B cell (primary cell): ENCODE measurements at regions of chr22 and their contacts with region 1.

Region 1: DNA sequence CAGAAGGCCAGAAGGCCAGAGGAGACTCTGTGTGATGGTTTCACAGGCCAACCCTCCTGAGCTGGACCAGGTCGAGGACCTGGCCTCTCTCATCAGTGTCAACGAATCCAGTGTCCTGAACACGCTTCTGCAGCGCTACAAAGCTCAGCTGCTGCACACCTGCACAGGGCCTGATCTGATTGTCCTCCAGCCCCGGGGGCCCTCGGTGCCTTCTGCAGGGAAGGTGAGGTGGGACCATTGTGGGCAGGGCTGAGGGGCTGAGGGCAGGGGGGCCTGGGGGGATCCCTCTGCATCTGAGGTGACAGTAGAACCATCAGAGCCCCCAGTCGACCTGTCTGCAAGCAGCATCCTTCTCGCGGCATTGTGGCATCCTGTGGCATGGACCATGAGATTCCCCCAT is 30.3 kb downstream of the MYO18B start:
- DNase-seq: no peak
- ATAC-seq: no peak
- H3K4me3 ChIP-seq: no peak overlapping the region
- H3K4me3 Mint-ChIP-seq: no peak overlapping the region
- H3K27ac ChIP-seq: no peak overlapping the region
- H3K27ac Mint-ChIP-seq: no peak overlapping the region
- H3K4me1 ChIP-seq: peaks cover 3 to 7% of the 10 kb centered on the region in 2 donors
- H3K4me1 Mint-ChIP-seq: peaks cover 9% of the 10 kb centered on the region
- H3K27me3 ChIP-seq: no peaks in the 10 kb centered on the region
- H3K27me3 Mint-ChIP-seq: peaks cover 4% of the 10 kb centered on the region
- CTCF ChIP-seq: no peak

Region 2: DNA sequence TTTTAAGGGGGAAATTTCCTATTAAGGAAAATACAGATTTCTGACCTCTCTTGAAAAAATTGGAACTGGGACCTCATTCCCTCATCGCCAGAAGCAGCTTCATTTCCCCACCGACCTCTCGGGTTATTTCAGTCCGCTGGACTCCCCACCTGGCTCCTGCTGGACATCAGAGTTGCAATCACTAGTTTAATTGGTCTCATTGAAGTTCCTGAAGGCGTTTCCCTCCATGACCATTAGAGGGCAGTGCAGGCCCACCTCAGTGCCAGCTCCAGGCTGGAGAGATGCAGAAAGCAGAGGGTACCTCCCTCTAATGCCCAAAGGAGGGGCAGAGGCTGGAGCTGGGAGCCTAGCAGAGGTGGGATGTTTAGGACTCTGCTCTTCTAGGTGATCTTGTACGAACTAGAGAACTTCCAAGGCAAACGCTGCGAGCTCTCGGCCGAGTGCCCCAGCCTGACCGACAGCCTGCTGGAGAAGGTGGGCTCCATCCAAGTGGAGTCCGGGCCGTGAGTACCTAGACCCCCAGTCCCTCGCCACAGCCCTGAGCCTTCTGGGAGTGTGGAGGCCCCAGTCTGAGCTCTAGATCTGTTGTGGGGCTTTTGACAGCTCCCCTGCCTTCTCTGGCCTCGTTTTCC is 569.9 kb before region 1 on chr22:
- CTCF ChIA-PET with region 1: no interaction called
- POLR2A ChIA-PET with region 1: no interaction called
- intact Hi-C with region 1: loop called (anchors 2 kb)
- DNase-seq: peak; percentile 54
- ATAC-seq: peak; percentile 54
- H3K4me3 ChIP-seq: no peak overlapping the region
- H3K4me3 Mint-ChIP-seq: no peak overlapping the region
- H3K27ac ChIP-seq: no peak overlapping the region
- H3K27ac Mint-ChIP-seq: no peak overlapping the region
- H3K4me1 ChIP-seq: no peaks in the 10 kb centered on the region
- H3K4me1 Mint-ChIP-seq: no peaks in the 10 kb centered on the region
- H3K27me3 ChIP-seq: no peaks in the 10 kb centered on the region
- H3K27me3 Mint-ChIP-seq: peaks cover 10% of the 10 kb centered on the region
- CTCF ChIP-seq: peak; percentile 95

Region 3: DNA sequence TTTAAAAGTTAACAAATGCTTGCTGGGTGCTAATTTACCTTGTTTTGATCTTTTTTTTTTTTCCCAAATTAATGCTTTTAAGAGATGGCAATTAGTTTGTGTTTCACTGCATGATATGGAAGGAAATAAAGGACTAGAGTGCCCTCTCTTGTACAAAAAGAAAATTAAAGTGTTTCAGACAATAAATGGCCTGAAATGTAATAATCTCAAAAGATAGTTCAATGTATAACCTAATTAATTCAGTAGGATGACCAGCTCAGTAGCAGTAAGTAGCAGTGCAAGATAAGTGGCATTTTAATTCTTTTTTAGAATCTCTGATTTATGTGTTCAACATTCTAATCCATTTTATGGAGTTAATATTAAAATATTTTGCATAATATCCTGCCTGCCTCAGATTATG is 70.2 kb before region 1 on chr22:
- CTCF ChIA-PET with region 1: interaction called, 18 read pairs
- POLR2A ChIA-PET with region 1: no interaction called
- intact Hi-C with region 1: loop called (anchors 2 kb)
- DNase-seq: peak; percentile 42
- ATAC-seq: peak; percentile 36
- H3K4me3 ChIP-seq: no peak overlapping the region
- H3K4me3 Mint-ChIP-seq: no peak overlapping the region
- H3K27ac ChIP-seq: no peak overlapping the region
- H3K27ac Mint-ChIP-seq: no peak overlapping the region
- H3K4me1 ChIP-seq: no peaks in the 10 kb centered on the region
- H3K4me1 Mint-ChIP-seq: peaks cover 7% of the 10 kb centered on the region
- H3K27me3 ChIP-seq: no peaks in the 10 kb centered on the region
- H3K27me3 Mint-ChIP-seq: no peaks in the 10 kb centered on the region
- CTCF ChIP-seq: peak; percentile 70

Region 4: GRCh38 chr22:25726241-25726640 is 46.0 kb before region 1 on chr22:
- CTCF ChIA-PET with region 1: no interaction called
- POLR2A ChIA-PET with region 1: no interaction called
- intact Hi-C with region 1: no loop called
- DNase-seq: no peak
- ATAC-seq: no peak
- H3K4me3 ChIP-seq: no peak overlapping the region
- H3K4me3 Mint-ChIP-seq: no peak overlapping the region
- H3K27ac ChIP-seq: no peak overlapping the region
- H3K27ac Mint-ChIP-seq: no peak overlapping the region
- H3K4me1 ChIP-seq: no peaks in the 10 kb centered on the region
- H3K4me1 Mint-ChIP-seq: peaks cover 8% of the 10 kb centered on the region
- H3K27me3 ChIP-seq: no peaks in the 10 kb centered on the region
- H3K27me3 Mint-ChIP-seq: no peaks in the 10 kb centered on the region
- CTCF ChIP-seq: no peak